BJ (cell line): ENCODE measurements at regions of chr4 and their contacts with region 1.

Region 1: GRCh38 chr4:72302981-72303704 is 265.9 kb downstream of the ADAMTS3 start:
- DNase-seq: no peak
- H3K4me3 ChIP-seq: no peak overlapping the region
- H3K27me3 ChIP-seq: no peaks in the 10 kb centered on the region
- CTCF ChIP-seq: peak; percentile 67

Region 2: DNA sequence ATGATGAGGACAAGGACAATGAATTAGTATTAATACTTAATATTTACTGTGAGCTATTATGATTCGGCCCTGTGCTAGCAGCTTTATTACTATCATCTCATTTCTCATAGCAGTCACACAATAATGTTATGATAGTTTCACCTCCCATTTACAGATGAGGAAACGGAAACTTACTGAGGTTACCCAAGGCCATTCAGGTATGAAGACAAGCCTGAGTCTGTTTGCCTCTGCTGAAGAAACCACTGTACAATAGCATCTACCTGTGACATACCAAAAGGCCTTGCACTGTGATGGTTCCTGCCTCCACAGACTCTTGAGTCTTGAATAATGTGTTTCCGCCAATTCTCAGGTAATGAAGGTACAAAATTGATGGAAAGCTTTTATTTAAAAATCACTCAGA is 22.9 kb before region 1 on chr4:
- CTCF ChIA-PET with region 1: interaction called, 10 read pairs
- POLR2A ChIA-PET with region 1: no interaction called
- DNase-seq: no peak
- H3K4me3 ChIP-seq: no peak overlapping the region
- H3K27me3 ChIP-seq: no peaks in the 10 kb centered on the region
- CTCF ChIP-seq: no peak